ENCODE measurements at regions of chr4 and their contacts with region 1.

Region 1: DNA sequence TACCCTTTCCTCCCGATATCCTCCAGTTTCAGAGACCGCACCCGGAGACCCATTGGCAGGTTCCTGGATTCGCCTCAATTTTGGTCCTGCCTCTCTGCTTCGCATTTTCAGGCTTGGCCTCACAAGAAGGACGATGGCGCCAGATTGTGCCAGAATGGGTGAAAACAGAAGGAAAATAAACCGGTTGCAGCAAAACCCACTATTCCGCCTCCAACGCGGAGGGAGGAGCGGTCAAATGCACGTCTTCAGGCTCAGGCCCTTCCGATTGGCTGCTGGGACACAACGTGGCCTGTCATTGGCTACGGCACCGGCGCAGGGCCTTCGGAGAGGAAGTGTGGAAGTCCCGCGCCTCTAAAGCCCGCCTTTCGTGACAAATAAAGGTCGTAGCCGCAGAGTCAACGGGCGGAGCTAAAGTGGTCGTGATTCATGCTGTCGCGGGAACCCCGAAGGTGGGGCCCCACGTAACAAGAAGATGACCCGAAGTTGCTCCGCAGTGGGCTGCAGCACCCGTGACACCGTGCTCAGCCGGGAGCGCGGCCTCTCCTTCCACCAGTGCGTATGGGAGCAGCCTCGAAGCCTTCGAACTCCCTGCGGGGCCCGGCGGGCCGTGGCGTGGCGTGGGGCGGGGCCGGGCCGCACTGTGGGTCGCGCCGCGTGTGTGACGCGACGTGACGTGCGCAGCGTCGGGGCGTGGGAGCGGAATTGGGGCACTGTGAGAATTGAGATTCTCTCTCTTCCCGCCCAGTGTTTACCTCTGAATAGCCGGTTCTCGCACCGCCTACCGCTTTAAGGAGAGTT is at the start of gene THAP9:
- DNase-seq: peak; percentile 98 to 100
- H3K4me3 ChIP-seq: peak within 1 kb of the TSS; percentile 60 to 74 (median 68)
- H3K27ac ChIP-seq: peak within 1 kb of the TSS; percentile 96 to 100 (median 99)
- H3K4me1 ChIP-seq: peaks cover 14 to 48% (median 28%) of the 10 kb centered on the region in 4 donors
- H3K27me3 ChIP-seq: no peaks in the 10 kb centered on the region
- CTCF ChIP-seq: no peak
- EP300 ChIP-seq: no peak
- POLR2A ChIP-seq: peak in 2 of 4 donors; percentile 71 to 82
- total RNA-seq, gene THAP9: 0.58 to 8.9 (median 8.6) TPM in 3 of 5 donors, not detected in the others

Region 2: DNA sequence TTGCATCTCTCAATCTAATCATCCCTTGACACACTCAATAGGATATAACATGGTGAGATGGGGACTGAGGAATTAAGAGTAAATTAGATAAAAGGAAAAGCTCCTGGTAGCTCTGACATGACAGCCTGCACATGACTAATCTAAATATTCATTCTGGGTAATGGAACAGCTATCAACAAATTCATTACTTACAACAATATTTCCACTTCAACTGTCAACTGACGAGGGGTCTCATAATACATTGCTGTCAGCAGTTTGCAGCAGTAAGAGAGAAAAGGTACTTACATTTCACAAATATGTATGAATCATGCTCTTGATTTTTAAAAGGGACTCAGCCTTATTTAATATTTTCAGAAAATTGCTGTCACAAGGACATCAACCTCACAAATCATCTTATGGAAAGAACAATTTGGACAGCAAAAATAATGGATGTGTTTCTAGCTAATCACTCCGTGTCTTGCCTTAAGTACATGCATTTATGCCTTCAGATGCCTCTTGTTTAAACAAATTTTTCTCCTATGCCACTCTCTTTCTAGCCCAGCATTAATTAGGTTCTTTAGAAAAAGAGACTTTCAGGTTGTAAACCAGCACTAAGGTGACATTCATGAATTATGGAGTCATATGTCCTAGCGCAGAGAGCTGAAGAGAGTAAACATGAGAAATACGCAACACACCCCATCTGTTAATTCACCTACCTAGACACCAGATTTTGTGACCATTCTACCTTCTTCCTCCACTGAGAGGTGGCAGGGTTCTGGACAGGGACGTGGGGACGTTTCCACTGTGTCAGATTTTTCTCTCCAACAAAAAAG is 239.1 kb before region 1 on chr4:
- intact Hi-C with region 1: no loop called
- DNase-seq: peak in 1 of 2 donors; percentile 20
- H3K4me3 ChIP-seq: no peak overlapping the region
- H3K27ac ChIP-seq: no peak overlapping the region
- H3K4me1 ChIP-seq: no peaks in the 10 kb centered on the region
- H3K27me3 ChIP-seq: no peaks in the 10 kb centered on the region
- CTCF ChIP-seq: no peak
- EP300 ChIP-seq: no peak
- POLR2A ChIP-seq: no peak

Region 3: GRCh38 chr4:82811838-82812341 is 88.6 kb before region 1 on chr4:
- intact Hi-C with region 1: no loop called
- DNase-seq: peak in 1 of 2 donors; percentile 48
- H3K4me3 ChIP-seq: no peak overlapping the region
- H3K27ac ChIP-seq: peak overlapping the region in 3 of 5 donors; percentile 31 to 61 (median 33)
- H3K4me1 ChIP-seq: peaks cover 0 to 12% (median 3%) of the 10 kb centered on the region in 4 donors
- H3K27me3 ChIP-seq: no peaks in the 10 kb centered on the region
- CTCF ChIP-seq: no peak
- EP300 ChIP-seq: no peak
- POLR2A ChIP-seq: no peak

Region 4: DNA sequence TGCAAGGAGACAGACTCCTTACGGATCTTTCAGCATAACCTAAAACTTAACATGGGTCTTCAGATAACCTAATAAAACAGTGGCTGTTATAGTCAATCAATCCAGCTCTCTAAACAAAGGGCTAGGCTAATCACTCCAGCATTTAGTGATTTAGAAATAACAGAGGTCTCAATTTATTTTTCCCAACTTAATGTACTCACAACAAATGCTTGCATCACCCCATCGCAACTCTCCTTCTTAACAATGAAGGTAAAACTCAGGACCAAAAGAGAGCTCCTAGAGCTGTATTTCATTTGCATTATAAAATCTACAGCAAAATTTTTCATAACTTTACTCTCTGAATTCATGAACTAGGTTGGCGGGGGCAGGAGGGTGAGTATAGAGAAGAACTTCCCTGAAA is 109.0 kb after region 1 on chr4:
- intact Hi-C with region 1: loop called (anchors 10 kb)
- DNase-seq: no peak
- H3K4me3 ChIP-seq: peak overlapping the region; percentile 71 to 88 (median 76)
- H3K27ac ChIP-seq: peak overlapping the region in 4 of 5 donors; percentile 92 to 95 (median 94)
- H3K4me1 ChIP-seq: peaks cover 25 to 58% (median 44%) of the 10 kb centered on the region in 4 donors
- H3K27me3 ChIP-seq: no peaks in the 10 kb centered on the region
- CTCF ChIP-seq: no peak
- EP300 ChIP-seq: no peak
- POLR2A ChIP-seq: no peak